ENCODE measurements at regions of chr2 and their contacts with region 1.

Region 1: GRCh38 chr2:25420820-25421237 is 79.1 kb upstream of the DNMT3A start:
- DNase-seq: peak; percentile 93
- ATAC-seq: peak; percentile 64
- H3K4me3 ChIP-seq: peak overlapping the region; percentile 75
- H3K27ac ChIP-seq: peak overlapping the region; percentile 98
- H3K4me1 ChIP-seq: peaks cover 35% of the 10 kb centered on the region
- H3K27me3 ChIP-seq: no peaks in the 10 kb centered on the region
- CTCF ChIP-seq: no peak
- EP300 ChIP-seq: peak; percentile 82 to 95
- POLR2A ChIP-seq: peak; percentile 72
- RAD21 ChIP-seq: 0 out of 2 replicates have a peak, but pooled peaks have one; percentile 12

Region 2: DNA sequence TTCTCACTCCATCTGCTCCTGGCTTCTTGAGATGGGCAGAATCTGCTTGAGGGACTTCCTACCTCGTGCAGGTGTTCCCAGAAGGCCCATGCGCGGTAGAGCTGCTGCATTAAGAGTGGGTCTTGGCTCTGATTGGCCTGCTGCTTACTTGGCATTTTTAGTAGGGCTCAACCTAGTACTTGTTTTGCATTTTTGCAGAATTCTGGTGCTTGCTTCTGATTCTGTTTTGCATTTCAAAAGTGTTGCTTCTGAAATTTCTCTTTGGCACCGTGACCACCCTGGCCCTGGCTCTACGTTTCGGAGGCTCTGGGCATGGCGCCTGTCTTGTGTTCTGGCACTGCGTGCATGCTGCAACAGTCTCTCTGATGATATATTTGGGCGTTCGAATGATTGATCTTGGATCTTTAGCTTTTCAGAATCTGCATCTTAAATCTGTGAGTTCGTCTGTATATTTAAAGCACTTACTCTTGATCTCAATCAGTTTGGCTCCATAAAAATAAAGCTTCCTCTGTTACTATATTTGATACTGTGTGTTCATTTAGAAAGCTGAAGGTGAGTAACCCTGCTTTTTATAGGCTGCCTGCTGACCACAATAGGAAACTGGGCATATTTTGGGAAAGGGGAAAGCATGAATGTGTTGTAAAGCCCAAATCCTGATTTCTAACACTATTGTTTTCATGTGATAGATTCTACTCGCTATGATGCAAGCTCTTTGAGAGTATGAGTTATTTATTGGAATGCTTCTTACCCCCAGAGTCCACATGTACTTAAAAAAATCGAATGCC is 356.8 kb before region 1 on chr2:
- CTCF ChIA-PET with region 1: no interaction called
- POLR2A ChIA-PET with region 1: no interaction called
- RAD21 ChIA-PET with region 1: no interaction called
- SMC1A ChIA-PET with region 1: no interaction called
- in situ Hi-C with region 1: no loop called
- intact Hi-C with region 1: no loop called
- DNase-seq: peak; percentile 39
- ATAC-seq: no peak
- H3K4me3 ChIP-seq: peak overlapping the region; percentile 50; the same call in 1 of the 2 replicates
- H3K27ac ChIP-seq: peak overlapping the region; percentile 20; the same call in 1 of the 2 replicates
- H3K4me1 ChIP-seq: peaks cover 13% of the 10 kb centered on the region; the same call in 1 of the 2 replicates
- H3K27me3 ChIP-seq: no peaks in the 10 kb centered on the region
- CTCF ChIP-seq: no peak
- EP300 ChIP-seq: peak in 1 of 2 experiments; percentile 48; a peak in 1 of 4 replicates
- POLR2A ChIP-seq: no peak
- RAD21 ChIP-seq: no peak

Region 3: DNA sequence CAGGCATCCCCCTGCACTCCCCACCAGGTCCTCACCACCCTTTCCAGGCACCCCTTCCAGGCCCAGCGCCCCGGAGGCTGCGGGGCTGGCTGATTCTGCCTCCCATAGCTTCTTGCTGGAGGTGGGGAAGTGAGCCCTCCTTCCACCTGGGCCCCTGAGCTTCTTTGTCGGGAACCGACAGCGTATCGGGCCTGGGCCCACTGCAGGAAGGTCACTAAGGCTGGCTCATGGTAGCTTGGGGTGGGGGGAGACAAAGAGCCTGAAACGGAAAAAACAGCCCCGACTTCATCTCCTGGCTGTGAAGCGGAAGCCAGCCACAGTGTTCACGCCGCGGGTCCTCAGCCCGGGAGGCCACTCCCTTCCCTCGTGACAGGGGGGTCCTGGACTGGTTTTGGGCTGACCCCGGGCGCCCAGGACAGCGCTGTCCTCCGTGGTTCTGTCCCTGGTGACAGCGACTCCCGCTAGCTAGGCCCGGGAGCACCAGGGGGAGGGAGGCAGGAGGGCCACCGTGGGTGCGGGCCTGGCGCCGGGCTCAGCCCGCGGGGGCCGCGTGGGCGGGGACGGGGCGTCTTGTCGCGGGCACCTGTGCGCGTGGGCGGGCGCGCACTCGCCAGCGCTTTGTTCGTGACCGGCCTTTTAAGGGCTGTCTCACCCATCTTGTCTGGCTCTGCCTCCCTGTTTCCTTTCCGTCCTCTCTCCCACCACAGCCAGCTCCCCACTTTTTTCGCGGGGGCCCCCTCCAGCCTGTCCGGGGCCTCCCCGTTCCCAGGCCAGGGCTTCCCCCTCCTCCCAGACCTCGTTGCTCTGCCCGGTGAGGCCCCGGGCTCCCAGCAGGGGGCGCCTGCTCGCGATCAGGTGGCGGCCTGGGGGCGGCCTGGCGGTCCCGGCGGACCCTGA is 144.0 kb before region 1 on chr2:
- CTCF ChIA-PET with region 1: interaction called, 8 read pairs
- POLR2A ChIA-PET with region 1: interaction called, 4 read pairs
- RAD21 ChIA-PET with region 1: interaction called, 5 read pairs
- SMC1A ChIA-PET with region 1: interaction called, 5 read pairs
- in situ Hi-C with region 1: no loop called
- intact Hi-C with region 1: loop called (anchors 5 kb)
- DNase-seq: no peak
- ATAC-seq: peak; percentile 41
- H3K4me3 ChIP-seq: peak overlapping the region; percentile 45; the same call in 1 of the 2 replicates
- H3K27ac ChIP-seq: peak overlapping the region; percentile 77
- H3K4me1 ChIP-seq: peaks cover 86% of the 10 kb centered on the region
- H3K27me3 ChIP-seq: no peaks in the 10 kb centered on the region
- CTCF ChIP-seq: peak; percentile 75 to 89 (median 80)
- EP300 ChIP-seq: 0 out of 4 replicates have a peak, but pooled peaks of 1 of the 2 experiments have one; percentile 34
- POLR2A ChIP-seq: peak; percentile 54; the same call in 1 of the 2 replicates
- RAD21 ChIP-seq: peak; percentile 58; the same call in 1 of the 2 replicates

Region 4: GRCh38 chr2:25367296-25367695 is 53.5 kb before region 1 on chr2:
- CTCF ChIA-PET with region 1: interaction called, 39 read pairs
- POLR2A ChIA-PET with region 1: interaction called, 37 read pairs
- RAD21 ChIA-PET with region 1: interaction called, 59 read pairs
- SMC1A ChIA-PET with region 1: interaction called, 39 read pairs
- in situ Hi-C with region 1: no loop called
- intact Hi-C with region 1: loop called (anchors 1 kb)
- DNase-seq: no peak
- ATAC-seq: no peak
- H3K4me3 ChIP-seq: no peak overlapping the region
- H3K27ac ChIP-seq: no peak overlapping the region
- H3K4me1 ChIP-seq: peaks cover 9% of the 10 kb centered on the region
- H3K27me3 ChIP-seq: no peaks in the 10 kb centered on the region
- CTCF ChIP-seq: no peak
- EP300 ChIP-seq: no peak
- POLR2A ChIP-seq: no peak
- RAD21 ChIP-seq: no peak

Region 5: GRCh38 chr2:25437881-25438662 is 17.2 kb after region 1 on chr2:
- CTCF ChIA-PET with region 1: interaction called, 17 read pairs
- POLR2A ChIA-PET with region 1: interaction called, 6 read pairs
- RAD21 ChIA-PET with region 1: interaction called, 5 read pairs
- SMC1A ChIA-PET with region 1: interaction called, 13 read pairs
- in situ Hi-C with region 1: no loop called
- intact Hi-C with region 1: no loop called
- DNase-seq: no peak
- ATAC-seq: peak; percentile 52; the same call in 2 of the 3 replicates
- H3K4me3 ChIP-seq: no peak overlapping the region
- H3K27ac ChIP-seq: no peak overlapping the region
- H3K4me1 ChIP-seq: peaks cover 7% of the 10 kb centered on the region; the same call in 1 of the 2 replicates
- H3K27me3 ChIP-seq: no peaks in the 10 kb centered on the region
- CTCF ChIP-seq: no peak
- EP300 ChIP-seq: no peak
- POLR2A ChIP-seq: no peak
- RAD21 ChIP-seq: no peak

Region 6: DNA sequence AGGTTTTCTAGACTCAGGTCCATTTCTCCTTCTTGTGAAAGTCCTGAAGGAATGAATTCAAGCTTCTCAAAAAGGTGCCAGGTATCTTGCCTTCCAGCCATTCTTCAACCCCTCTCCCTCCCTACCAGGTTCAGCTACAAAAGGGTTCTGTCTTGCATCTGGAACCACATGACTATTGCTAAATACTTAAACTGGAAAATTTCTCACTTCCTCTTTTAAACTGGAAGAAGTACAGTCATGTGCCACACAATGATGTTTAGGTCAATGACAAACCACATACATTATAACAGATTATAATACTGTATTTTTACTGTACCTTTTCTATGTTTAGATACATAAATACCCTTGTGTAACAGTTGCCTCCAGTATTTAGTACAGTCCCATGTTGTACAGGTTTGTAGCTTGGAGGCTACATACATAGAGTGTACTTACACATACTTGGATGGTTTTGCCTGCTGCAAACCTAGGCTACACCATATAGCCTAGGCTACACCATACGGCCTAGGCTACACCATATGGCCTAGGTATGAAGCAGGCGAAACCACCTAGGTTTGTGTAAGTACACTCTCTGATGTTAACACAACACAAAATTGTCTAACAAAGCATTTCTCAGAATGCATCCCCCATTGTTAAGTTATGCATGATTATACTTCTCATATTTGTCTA is 62.9 kb after region 1 on chr2:
- CTCF ChIA-PET with region 1: interaction called, 3 read pairs
- POLR2A ChIA-PET with region 1: no interaction called
- RAD21 ChIA-PET with region 1: interaction called, 8 read pairs
- SMC1A ChIA-PET with region 1: interaction called, 11 read pairs
- in situ Hi-C with region 1: no loop called
- intact Hi-C with region 1: no loop called
- DNase-seq: no peak
- ATAC-seq: peak; percentile 90
- H3K4me3 ChIP-seq: no peak overlapping the region
- H3K27ac ChIP-seq: peak overlapping the region; percentile 54
- H3K4me1 ChIP-seq: peaks cover 9% of the 10 kb centered on the region
- H3K27me3 ChIP-seq: no peaks in the 10 kb centered on the region
- CTCF ChIP-seq: no peak
- EP300 ChIP-seq: peak; percentile 59 to 62; a peak in 2 of 4 replicates
- POLR2A ChIP-seq: no peak
- RAD21 ChIP-seq: no peak